BJ (cell line): ENCODE measurements at regions of chr2 and their contacts with region 1.

Region 1: DNA sequence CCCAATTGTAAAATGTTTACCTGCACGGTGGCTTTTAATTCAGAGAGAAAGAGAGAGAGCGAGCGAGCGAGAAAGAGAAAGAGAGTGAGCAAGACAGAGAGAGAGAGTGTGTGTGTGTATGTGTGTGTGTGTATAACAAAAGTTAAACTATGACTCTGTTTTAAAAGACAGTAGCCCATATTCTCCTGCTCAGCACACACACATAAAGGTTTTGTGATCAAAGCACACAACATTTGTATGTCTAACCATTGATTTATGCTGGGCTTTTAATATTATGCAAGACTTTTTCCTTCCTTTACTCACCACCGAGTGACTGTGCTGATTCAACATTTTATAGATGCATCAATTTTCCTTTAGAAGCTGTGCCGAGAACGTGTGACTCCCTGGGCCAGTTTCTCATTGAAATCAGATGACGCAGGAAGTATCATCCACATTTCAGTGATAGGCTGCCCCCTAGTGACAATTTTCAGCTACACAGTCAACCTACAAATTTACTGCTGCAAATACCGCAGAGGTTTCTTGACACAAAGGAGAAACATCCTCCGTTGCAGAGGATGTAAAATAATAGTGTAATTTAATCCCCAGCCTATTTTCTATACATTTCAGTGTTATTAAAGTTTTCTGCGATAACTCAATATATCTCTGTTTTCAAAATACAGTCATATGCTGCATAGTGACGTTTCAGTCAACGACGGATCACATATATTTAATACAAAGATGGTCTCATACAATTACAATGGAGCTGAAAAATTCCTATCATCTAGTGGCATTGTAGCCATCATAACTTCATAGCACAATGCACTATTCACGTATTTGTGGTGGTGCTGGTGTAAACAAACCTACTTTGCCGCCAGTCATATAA is 165.9 kb upstream of the TANK start:
- DNase-seq: peak; percentile 82
- H3K4me3 ChIP-seq: no peak overlapping the region
- H3K27me3 ChIP-seq: no peaks in the 10 kb centered on the region
- CTCF ChIP-seq: peak; percentile 74

Region 2: DNA sequence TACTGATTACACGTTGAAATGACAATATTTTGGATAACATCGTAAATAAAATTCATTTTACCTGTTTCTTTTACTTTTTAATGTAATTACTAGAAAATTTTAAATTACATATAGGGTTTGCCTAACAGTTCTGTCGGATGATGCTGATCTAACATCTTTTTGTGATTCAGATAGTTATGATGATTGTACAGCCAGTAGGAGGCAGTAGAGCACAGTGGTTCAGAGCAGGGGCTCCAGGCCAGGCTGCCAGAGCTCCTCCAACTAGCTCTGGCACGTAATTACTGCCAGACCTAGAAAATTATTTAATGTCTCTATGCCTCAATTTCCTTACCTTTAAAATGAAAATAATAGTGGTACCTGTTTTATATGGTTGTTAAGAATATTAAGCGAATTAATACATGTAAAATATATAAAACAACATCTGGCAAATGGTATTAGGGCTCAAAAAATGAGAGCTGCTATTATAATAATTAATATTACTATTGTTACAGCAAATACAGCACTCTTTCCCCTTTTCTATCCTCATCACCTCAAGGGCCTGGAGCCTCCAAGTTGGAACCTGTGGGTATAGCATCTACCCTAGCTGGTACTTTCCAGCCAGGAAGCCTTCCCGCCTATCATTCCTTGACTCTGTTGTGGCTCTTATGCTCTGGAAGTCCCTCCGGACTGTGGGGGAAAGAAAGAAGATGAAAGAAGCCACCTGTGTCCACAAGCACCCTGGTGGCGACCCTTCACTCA is 884.3 kb before region 1 on chr2:
- CTCF ChIA-PET with region 1: interaction called, 43 read pairs
- POLR2A ChIA-PET with region 1: no interaction called
- DNase-seq: peak; percentile 27
- H3K4me3 ChIP-seq: no peak overlapping the region
- H3K27me3 ChIP-seq: no peaks in the 10 kb centered on the region
- CTCF ChIP-seq: peak; percentile 80

Region 3: GRCh38 chr2:160252278-160252887 is 742.0 kb before region 1 on chr2:
- CTCF ChIA-PET with region 1: interaction called, 17 read pairs
- POLR2A ChIA-PET with region 1: no interaction called
- DNase-seq: no peak
- H3K4me3 ChIP-seq: no peak overlapping the region
- H3K27me3 ChIP-seq: no peaks in the 10 kb centered on the region
- CTCF ChIP-seq: peak; percentile 73

Region 4: GRCh38 chr2:160269803-160270570 is 724.4 kb before region 1 on chr2:
- CTCF ChIA-PET with region 1: interaction called, 15 read pairs
- POLR2A ChIA-PET with region 1: no interaction called
- DNase-seq: peak; percentile 74
- H3K4me3 ChIP-seq: peak overlapping the region; percentile 39
- H3K27me3 ChIP-seq: no peaks in the 10 kb centered on the region
- CTCF ChIP-seq: peak; percentile 78

Region 5: DNA sequence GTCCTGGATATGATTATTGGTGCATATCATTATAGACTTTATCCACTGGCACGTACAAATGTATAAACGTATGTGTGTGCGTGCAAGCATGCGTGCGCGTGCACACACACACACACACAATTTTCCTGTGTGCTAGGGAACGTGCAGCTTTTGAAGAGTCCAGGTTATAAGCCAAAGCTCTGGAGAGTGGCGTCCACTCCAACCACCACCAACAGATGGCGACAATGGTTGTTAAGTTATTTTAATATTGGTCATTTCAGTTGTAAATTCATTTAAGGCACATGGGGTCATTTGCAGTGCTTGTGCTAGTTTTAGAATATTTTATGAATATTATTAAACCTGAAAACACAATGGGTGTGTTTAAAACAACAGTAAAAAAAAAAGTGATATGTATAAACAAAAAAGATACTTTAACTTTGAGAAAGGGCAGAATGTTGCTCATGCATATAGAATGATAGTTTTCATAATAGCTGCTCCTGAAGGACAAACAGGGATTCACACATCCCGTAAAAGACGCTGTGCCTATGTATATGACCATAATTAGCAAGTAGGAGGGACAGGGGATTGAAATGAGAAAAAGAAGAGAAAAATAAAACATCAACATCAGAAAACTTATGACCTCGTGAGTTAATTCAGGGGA is 670.1 kb before region 1 on chr2:
- CTCF ChIA-PET with region 1: interaction called, 13 read pairs
- POLR2A ChIA-PET with region 1: no interaction called
- DNase-seq: no peak
- H3K4me3 ChIP-seq: no peak overlapping the region
- H3K27me3 ChIP-seq: no peaks in the 10 kb centered on the region
- CTCF ChIP-seq: peak; percentile 76

Region 6: GRCh38 chr2:161004379-161004778 is 10.0 kb after region 1 on chr2:
- CTCF ChIA-PET with region 1: interaction called, 13 read pairs
- POLR2A ChIA-PET with region 1: no interaction called
- DNase-seq: no peak
- H3K4me3 ChIP-seq: no peak overlapping the region
- H3K27me3 ChIP-seq: no peaks in the 10 kb centered on the region
- CTCF ChIP-seq: peak; percentile 54

Region 7: GRCh38 chr2:161063157-161063954 is 69.0 kb after region 1 on chr2:
- CTCF ChIA-PET with region 1: interaction called, 11 read pairs
- POLR2A ChIA-PET with region 1: no interaction called
- DNase-seq: peak; percentile 34
- H3K4me3 ChIP-seq: no peak overlapping the region
- H3K27me3 ChIP-seq: no peaks in the 10 kb centered on the region
- CTCF ChIP-seq: peak; percentile 87